Aorta (tissue), 5 donors: ENCODE measurements at regions of chr9 and their contacts with region 1.

Region 1: DNA sequence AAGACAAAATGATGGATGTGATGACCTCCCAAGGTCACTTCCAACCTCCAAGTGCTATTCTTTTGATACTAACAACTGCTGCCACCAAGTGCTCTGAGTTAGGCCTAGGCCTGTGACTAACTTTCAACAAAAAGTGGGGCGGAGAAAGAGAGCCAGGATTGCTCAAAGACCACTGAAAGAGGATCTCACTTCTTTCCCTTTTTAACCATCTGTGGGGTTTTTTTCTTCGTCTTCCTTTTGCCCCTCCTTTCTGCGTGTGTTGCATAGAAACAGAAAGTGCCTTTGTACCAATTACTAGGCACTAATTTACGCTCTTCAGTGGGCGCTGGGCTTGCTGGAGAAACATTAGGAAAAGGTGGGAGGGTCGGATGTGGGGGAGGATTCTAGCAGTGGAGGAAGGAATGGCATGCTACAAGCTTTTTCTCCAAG is 8.0 kb downstream of the KLF9 start:
- DNase-seq: no peak
- ATAC-seq: no peak
- H3K4me3 ChIP-seq: no peak overlapping the region
- H3K27ac ChIP-seq: peak overlapping the region in 1 of 2 donors; percentile 66
- H3K4me1 ChIP-seq: peaks cover 6 to 22% of the 10 kb centered on the region in 2 donors
- H3K27me3 ChIP-seq: no peaks in the 10 kb centered on the region

Region 2: DNA sequence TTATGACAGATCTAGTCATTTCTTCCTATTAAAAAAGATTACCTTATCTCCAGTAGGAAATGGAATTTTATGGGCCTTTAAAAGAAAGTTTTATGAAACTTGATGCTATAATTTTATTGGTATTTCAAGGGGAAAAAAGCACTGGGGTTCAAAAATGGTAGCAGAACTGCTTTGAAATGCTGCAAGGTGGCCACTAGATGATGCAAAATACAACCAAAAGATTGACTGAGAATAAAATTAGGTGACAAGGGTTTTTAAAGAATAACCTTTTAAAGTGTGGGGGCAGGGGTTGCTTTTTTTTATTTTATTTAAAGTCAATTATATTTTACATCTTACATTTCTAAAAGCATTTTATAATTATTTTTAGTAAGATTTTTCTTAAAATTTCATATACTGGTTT is 53.6 kb before region 1 on chr9:
- intact Hi-C with region 1: loop called in 1 of 2 experiments (anchors 5 kb)
- DNase-seq: no peak
- ATAC-seq: no peak
- H3K4me3 ChIP-seq: no peak overlapping the region
- H3K27ac ChIP-seq: no peak overlapping the region
- H3K4me1 ChIP-seq: no peaks in the 10 kb centered on the region
- H3K27me3 ChIP-seq: no peaks in the 10 kb centered on the region

Region 3: GRCh38 chr9:70451765-70452164 is 45.3 kb after region 1 on chr9:
- intact Hi-C with region 1: no loop called
- DNase-seq: no peak
- ATAC-seq: no peak
- H3K4me3 ChIP-seq: no peak overlapping the region
- H3K27ac ChIP-seq: no peak overlapping the region
- H3K4me1 ChIP-seq: peaks cover 0 to 5% of the 10 kb centered on the region in 2 donors
- H3K27me3 ChIP-seq: no peaks in the 10 kb centered on the region